GM23248 (cell line): ENCODE measurements at regions of chr11 and their contacts with region 1.

Region 1: DNA sequence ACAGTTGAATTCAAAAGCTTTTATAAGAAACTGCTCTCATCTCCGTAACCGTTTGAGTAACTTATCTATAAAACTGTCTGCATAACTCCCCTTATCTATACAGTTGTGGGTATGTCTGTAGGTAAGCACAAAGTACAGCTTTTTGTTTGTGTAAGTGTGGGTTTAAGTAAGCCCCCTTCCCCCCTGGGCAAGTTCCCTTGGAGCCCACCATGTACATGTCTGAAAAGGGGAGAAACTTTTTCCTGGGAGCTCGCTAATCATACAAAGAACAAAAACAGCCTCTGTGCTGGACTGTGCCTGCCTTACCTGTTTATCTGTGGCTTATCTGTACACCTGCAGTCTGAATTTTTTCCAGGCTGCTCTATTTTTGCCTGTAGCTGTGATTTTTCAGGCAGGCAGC is 36.3 kb upstream of the TMEM45B start:
- DNase-seq: no peak
- H3K4me3 ChIP-seq: no peak overlapping the region
- H3K27ac ChIP-seq: no peak overlapping the region
- H3K4me1 ChIP-seq: no peaks in the 10 kb centered on the region
- H3K27me3 ChIP-seq: peaks cover 77% of the 10 kb centered on the region

Region 2: DNA sequence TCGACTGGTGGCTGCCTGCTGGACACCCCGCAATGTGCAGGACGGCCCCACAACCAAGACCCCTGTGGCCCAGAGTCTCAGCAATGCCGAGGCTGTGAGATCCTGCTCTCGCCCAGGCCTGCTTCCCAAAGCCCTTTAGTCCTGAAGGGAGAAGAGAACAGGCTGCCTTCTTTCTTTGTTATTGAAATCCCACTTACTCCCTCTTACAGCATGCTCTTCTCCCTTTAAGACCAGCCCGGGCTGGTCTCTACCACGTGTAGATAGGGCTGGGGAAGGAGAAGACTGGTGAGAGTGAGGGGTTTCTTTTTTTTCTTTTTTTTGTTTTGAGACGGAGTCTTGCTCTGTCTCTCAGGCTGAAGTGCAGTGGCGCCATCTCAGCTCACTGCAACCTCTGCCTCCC is 57.6 kb after region 1 on chr11:
- in situ Hi-C with region 1: loop called (anchors 10 kb)
- DNase-seq: no peak
- H3K4me3 ChIP-seq: no peak overlapping the region
- H3K27ac ChIP-seq: no peak overlapping the region
- H3K4me1 ChIP-seq: no peaks in the 10 kb centered on the region
- H3K27me3 ChIP-seq: peaks cover 34% of the 10 kb centered on the region